ENCODE measurements at regions of chr10 and their contacts with region 1.

Region 1: DNA sequence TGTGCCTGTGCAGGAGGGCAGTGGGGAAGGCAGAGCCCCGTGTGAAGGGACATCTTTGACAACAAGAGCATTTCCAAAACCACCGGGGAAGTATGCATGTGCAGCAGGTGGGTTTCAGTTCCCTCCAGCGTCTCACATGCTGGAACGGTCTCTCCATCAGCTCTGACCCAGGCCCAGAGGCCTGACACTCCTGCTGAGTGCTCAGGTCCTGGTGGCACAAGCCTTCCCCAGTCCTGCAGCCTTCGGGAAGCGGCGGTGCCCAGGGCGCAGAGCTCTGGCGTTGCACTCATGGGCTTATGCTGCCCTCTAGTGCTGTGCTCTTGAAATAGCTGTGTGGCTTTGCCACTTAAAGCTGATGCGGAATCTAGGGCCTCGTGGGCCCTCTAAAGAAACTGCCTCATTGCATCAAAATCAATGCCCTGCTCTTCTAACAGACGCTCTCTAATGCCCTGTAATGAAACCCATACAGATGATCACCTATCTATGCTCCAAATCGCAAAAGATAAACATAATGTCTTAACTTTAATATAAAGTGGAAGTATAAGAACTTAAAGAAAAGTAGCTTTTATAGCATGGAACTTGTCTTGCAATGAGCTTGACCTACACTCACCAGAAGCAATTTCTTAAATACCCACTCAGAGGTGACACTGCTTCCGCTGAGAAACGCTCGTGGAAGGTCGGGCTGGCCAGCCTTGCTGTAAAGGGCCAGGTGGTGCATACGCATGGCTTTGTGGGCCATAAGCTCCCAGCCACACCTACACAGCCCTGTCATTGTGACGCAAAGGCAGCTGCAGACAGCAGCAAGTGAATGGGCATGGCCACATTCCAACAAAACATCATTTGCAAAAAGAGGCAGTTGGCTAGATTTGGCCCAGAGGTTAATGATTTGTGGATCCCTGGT is 38.6 kb downstream of the CLRN3 start:
- DNase-seq: peak; percentile 59 to 65
- H3K4me3 ChIP-seq: no peak overlapping the region
- H3K27ac ChIP-seq: no peak overlapping the region
- H3K4me1 ChIP-seq: no peaks in the 10 kb centered on the region
- H3K27me3 ChIP-seq: no peaks in the 10 kb centered on the region
- CTCF ChIP-seq: peak; percentile 49 to 91 (median 75)
- POLR2A ChIP-seq: no peak

Region 2: DNA sequence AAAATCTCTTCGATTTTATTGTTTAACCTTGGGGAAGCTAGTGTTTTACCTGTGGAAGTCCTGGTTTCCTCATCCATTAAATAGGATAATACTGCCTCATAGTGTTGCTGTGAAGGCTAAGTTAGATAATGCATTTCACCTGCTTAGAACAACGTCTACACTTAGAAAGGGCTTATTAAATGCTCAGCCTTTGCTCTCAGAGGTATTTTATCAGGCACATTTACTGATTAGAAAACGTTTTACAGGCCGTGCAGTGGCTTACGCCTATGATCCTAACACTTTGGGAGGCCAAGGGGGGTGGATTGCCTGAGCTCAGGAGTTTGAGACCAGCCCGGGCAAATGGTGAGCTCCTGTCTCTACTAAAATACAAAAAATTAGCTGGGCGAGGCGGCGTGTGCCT is 802.1 kb before region 1 on chr10:
- intact Hi-C with region 1: no loop called
- DNase-seq: no peak
- H3K4me3 ChIP-seq: no peak overlapping the region
- H3K27ac ChIP-seq: no peak overlapping the region
- H3K4me1 ChIP-seq: no peaks in the 10 kb centered on the region
- H3K27me3 ChIP-seq: no peaks in the 10 kb centered on the region
- CTCF ChIP-seq: no peak
- POLR2A ChIP-seq: no peak

Region 3: DNA sequence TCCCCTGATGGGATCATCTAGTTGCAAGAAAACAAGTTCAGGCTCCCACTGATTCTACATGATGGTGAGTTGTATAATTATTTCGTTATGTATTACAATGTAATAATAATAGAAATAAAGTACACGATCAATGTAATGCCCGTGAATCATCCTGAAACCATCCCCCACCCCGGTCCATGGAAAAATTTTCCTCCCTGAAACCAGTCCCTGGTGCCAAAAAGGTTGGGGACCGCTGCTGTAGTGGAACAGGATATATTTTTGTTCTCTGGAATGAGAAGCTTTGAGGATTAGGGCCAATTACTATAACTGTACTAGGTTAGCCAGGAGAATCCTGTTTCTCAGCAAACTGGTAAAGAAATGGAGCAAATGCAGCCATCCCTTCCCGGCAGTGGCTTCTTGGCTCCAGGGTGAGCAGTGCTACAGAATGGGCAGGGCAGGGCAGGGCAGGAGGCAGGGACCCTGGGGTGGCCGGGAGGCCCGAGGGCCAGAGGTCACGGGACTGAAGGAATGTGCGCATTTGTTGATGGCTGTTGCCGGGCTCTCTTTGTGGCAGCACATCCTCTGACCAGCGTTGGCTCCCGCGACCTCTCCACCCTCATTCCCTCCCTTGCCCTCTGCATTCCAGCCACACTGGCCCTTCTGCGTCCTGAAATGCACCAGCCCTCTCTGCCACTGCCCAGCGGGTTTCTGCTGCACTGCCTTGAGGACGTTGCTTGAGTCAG is 467.4 kb before region 1 on chr10:
- intact Hi-C with region 1: no loop called
- DNase-seq: no peak
- H3K4me3 ChIP-seq: no peak overlapping the region
- H3K27ac ChIP-seq: no peak overlapping the region
- H3K4me1 ChIP-seq: peaks cover 0 to under 1% of the 10 kb centered on the region in 2 donors
- H3K27me3 ChIP-seq: no peaks in the 10 kb centered on the region
- CTCF ChIP-seq: no peak
- POLR2A ChIP-seq: no peak

Region 4: DNA sequence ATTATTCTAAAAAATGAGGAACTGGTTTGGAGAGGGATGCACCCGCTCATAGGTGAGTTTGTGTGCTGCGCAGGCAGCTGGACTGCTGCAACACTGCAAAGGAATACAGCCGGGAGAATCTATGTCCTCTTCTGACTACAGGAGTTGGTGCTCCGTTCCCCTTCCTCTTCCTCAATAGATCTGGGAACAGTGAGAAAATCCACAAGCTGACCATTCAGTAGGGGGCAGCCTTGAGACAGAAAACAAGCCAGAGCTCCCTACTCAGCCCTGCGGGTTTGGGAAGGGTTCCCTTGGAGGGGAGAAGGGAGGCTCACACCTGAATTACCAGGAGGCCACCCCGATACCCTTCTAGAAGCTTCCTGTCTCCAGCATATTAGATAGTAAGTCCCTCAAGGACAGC is 204.5 kb before region 1 on chr10:
- intact Hi-C with region 1: loop called (anchors 5 kb)
- DNase-seq: peak; percentile 9 to 30
- H3K4me3 ChIP-seq: no peak overlapping the region
- H3K27ac ChIP-seq: no peak overlapping the region
- H3K4me1 ChIP-seq: no peaks in the 10 kb centered on the region
- H3K27me3 ChIP-seq: no peaks in the 10 kb centered on the region
- CTCF ChIP-seq: peak in 4 of 6 experiments; percentile 30 to 45 (median 34)
- POLR2A ChIP-seq: no peak

Region 5: GRCh38 chr10:127715782-127716378 is 138.2 kb before region 1 on chr10:
- intact Hi-C with region 1: loop called (anchors 5 kb)
- DNase-seq: no peak
- H3K4me3 ChIP-seq: no peak overlapping the region
- H3K27ac ChIP-seq: no peak overlapping the region
- H3K4me1 ChIP-seq: no peaks in the 10 kb centered on the region
- H3K27me3 ChIP-seq: no peaks in the 10 kb centered on the region
- CTCF ChIP-seq: peak in 5 of 6 experiments; percentile 10 to 63 (median 44)
- POLR2A ChIP-seq: no peak

Region 6: DNA sequence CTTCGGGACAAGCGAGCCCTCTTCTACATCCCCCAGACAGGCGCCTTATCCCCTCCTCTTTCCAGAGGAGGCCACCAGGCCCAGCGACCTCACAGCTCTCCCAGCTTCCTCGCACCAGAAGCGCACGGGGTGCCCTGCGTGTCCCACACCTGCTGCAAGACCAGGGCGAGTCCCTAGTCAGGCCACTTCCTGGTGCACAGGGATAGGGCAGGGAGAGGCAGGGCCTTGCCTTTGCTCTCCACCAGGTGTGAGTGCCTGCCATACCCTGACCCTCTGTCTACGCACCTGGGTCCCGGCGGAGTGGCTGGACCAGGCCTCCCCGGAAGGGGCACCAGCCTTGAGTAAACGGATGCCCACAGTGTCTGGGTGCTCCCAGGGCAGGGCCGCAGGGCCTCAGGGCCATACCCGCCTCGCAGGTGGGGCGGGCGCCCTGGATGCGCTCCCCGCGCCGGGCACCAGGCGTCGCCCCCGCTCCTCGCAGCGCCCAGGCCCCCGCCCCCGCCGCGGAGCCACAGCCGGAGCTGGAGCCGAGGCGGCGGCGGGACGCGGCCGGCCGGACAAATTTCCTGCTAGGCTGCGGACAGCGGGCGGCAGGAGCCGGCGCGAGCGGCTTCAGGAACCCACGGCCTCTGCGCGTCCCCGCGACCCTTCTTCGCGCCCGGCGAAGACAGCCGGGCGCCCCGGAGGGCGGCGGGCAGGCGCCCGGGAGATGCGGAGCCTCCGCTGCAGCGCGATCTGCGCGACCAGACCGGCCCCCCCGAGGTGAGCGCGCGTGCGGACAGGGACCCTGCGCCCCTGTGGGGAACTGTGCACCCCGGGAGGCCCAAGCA is 52.6 kb after region 1 on chr10 and contains the start of gene PTPRE:
- intact Hi-C with region 1: no loop called
- DNase-seq: peak; percentile 52 to 53
- H3K4me3 ChIP-seq: peak within 1 kb of the TSS in 1 of 3 donors; percentile 44
- H3K27ac ChIP-seq: peak within 1 kb of the TSS in 2 of 3 donors; percentile 70 to 72
- H3K4me1 ChIP-seq: peaks cover 3 to 9% of the 10 kb centered on the region in 2 donors
- H3K27me3 ChIP-seq: no peaks in the 10 kb centered on the region
- CTCF ChIP-seq: peak; percentile 12 to 95 (median 54)
- POLR2A ChIP-seq: no peak
- total RNA-seq, gene PTPRE: 16.8 to 25.0 (median 19.4) TPM

Region 7: GRCh38 chr10:128095027-128095752 is 241.1 kb after region 1 on chr10:
- intact Hi-C with region 1: no loop called
- DNase-seq: no peak
- H3K4me3 ChIP-seq: no peak overlapping the region
- H3K27ac ChIP-seq: no peak overlapping the region
- H3K4me1 ChIP-seq: no peaks in the 10 kb centered on the region
- H3K27me3 ChIP-seq: no peaks in the 10 kb centered on the region
- CTCF ChIP-seq: no peak
- POLR2A ChIP-seq: no peak